CD4-positive, alpha-beta memory T cell (primary cell): ENCODE measurements at regions of chr2 and their contacts with region 1.

Region 1: DNA sequence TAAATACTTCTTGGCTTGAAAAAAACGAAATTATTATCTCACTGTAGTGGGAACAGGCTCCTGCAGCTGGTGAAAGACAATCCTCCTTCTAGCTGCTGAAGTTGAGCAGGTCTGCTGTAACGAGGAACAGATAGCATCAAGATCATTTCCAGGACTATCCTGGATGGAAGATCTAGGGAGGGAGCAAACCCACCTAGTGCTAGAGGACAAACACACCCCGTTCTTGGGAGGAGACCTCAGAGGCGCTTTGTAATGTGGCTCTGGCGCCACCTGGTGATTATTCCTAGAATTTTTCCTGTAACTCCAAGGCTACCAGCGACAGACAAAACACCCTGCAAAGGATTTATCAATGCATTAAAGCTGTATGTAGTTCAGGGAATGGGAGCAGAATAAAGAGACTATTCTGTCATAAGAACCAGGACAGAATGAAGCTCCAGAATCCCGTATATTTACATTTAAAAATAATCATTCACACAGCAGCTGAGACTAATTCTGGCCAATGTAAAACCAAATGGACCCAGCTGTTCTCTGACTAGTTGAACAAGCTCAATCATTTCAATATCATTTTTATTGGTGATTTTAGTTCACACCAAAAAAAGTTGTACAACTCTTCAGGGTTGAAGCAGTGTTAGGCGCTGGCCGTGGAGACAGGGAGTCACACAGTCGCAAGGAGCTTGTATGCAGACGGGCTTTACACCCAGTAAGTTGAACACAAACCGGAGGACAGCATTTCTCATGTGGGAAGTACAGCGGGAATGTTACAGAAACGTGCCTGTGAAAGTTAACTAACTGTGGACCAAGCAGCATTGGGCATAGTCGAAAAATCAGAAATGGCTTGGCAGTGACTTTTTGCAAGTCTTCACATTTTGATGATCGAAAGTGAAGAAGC is 290.3 kb downstream of the TRIB2 start:
- DNase-seq: peak; percentile 49 to 67 (median 61)
- H3K4me3 ChIP-seq: no peak overlapping the region
- H3K4me3 Mint-ChIP-seq: no peak overlapping the region
- H3K27ac ChIP-seq: no peak overlapping the region
- H3K27ac Mint-ChIP-seq: no peak overlapping the region
- H3K4me1 ChIP-seq: peaks cover 5% of the 10 kb centered on the region
- H3K4me1 Mint-ChIP-seq: peaks cover 0 to 7% (median 3%) of the 10 kb centered on the region in 4 donors
- H3K27me3 ChIP-seq: no peaks in the 10 kb centered on the region
- H3K27me3 Mint-ChIP-seq: peaks cover 0 to 2% of the 10 kb centered on the region in 2 donors

Region 2: GRCh38 chr2:11477994-11478393 is 1529.1 kb before region 1 on chr2:
- CTCF ChIA-PET with region 1: interaction called, 3 read pairs
- POLR2A ChIA-PET with region 1: no interaction called
- intact Hi-C with region 1: loop called (anchors 1 kb)
- DNase-seq: peak; percentile 57 to 71 (median 63)
- H3K4me3 ChIP-seq: no peak overlapping the region
- H3K4me3 Mint-ChIP-seq: no peak overlapping the region
- H3K27ac ChIP-seq: no peak overlapping the region
- H3K27ac Mint-ChIP-seq: no peak overlapping the region
- H3K4me1 ChIP-seq: peaks cover under 1% of the 10 kb centered on the region
- H3K4me1 Mint-ChIP-seq: peaks cover under 1 to 5% (median 1%) of the 10 kb centered on the region in 4 donors
- H3K27me3 ChIP-seq: no peaks in the 10 kb centered on the region
- H3K27me3 Mint-ChIP-seq: peaks cover 12 to 17% of the 10 kb centered on the region in 2 donors

Region 3: GRCh38 chr2:11829947-11830707 is 1176.9 kb before region 1 on chr2:
- CTCF ChIA-PET with region 1: interaction called, 74 read pairs
- POLR2A ChIA-PET with region 1: no interaction called
- intact Hi-C with region 1: loop called (anchors 1 kb)
- DNase-seq: peak; percentile 62 to 76 (median 68)
- H3K4me3 ChIP-seq: peak overlapping the region; percentile 52 to 53
- H3K4me3 Mint-ChIP-seq: peak overlapping the region; percentile 83 to 92 (median 85)
- H3K27ac ChIP-seq: no peak overlapping the region
- H3K27ac Mint-ChIP-seq: peak overlapping the region; percentile 42 to 90 (median 82)
- H3K4me1 ChIP-seq: peaks cover 28% of the 10 kb centered on the region
- H3K4me1 Mint-ChIP-seq: peaks cover 23 to 45% (median 36%) of the 10 kb centered on the region in 4 donors
- H3K27me3 ChIP-seq: no peaks in the 10 kb centered on the region
- H3K27me3 Mint-ChIP-seq: no peaks in the 10 kb centered on the region

Region 4: DNA sequence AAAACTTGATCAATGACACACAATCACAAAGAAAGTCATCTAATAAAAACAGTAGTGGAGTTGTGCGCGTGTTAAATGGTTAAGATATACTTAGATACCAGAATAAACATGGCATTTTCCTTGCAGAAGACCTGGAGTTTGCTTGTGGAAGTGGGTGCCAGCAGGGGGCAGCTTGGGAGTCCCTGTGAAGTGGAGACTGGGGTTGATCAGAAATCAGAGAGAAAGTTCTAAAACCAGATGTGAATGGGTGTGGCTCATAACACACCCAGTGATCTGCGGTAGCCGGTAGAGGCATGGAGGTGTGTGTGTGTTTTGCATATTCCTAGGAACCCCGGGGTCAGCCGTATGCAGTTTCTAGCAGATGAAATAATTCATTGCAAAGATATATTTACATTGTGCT is 590.5 kb before region 1 on chr2:
- CTCF ChIA-PET with region 1: interaction called, 22 read pairs
- POLR2A ChIA-PET with region 1: no interaction called
- intact Hi-C with region 1: loop called (anchors 1 kb)
- DNase-seq: peak; percentile 64 to 71 (median 68)
- H3K4me3 ChIP-seq: no peak overlapping the region
- H3K4me3 Mint-ChIP-seq: peak overlapping the region in 7 of 8 donors; percentile 9 to 68 (median 52)
- H3K27ac ChIP-seq: no peak overlapping the region
- H3K27ac Mint-ChIP-seq: peak overlapping the region in 6 of 7 donors; percentile 0 to 65 (median 46)
- H3K4me1 ChIP-seq: peaks cover 49% of the 10 kb centered on the region
- H3K4me1 Mint-ChIP-seq: peaks cover 34 to 75% (median 49%) of the 10 kb centered on the region in 4 donors
- H3K27me3 ChIP-seq: no peaks in the 10 kb centered on the region
- H3K27me3 Mint-ChIP-seq: no peaks in the 10 kb centered on the region

Region 5: GRCh38 chr2:12702305-12703121 is 304.6 kb before region 1 on chr2:
- CTCF ChIA-PET with region 1: interaction called, 10 read pairs
- POLR2A ChIA-PET with region 1: no interaction called
- intact Hi-C with region 1: no loop called
- DNase-seq: no peak
- H3K4me3 ChIP-seq: no peak overlapping the region
- H3K4me3 Mint-ChIP-seq: peak overlapping the region in 7 of 8 donors; percentile 40 to 75 (median 58)
- H3K27ac ChIP-seq: no peak overlapping the region
- H3K27ac Mint-ChIP-seq: peak overlapping the region in 2 of 7 donors; percentile 45 to 60
- H3K4me1 ChIP-seq: peaks cover 50% of the 10 kb centered on the region
- H3K4me1 Mint-ChIP-seq: peaks cover 32 to 48% (median 44%) of the 10 kb centered on the region in 4 donors
- H3K27me3 ChIP-seq: no peaks in the 10 kb centered on the region
- H3K27me3 Mint-ChIP-seq: no peaks in the 10 kb centered on the region

Region 6: GRCh38 chr2:12931186-12931844 is 75.8 kb before region 1 on chr2:
- CTCF ChIA-PET with region 1: interaction called, 34 read pairs
- POLR2A ChIA-PET with region 1: no interaction called
- intact Hi-C with region 1: loop called (anchors 2 kb)
- DNase-seq: peak in 4 of 5 donors; percentile 13 to 25 (median 22)
- H3K4me3 ChIP-seq: no peak overlapping the region
- H3K4me3 Mint-ChIP-seq: no peak overlapping the region
- H3K27ac ChIP-seq: no peak overlapping the region
- H3K27ac Mint-ChIP-seq: no peak overlapping the region
- H3K4me1 ChIP-seq: peaks cover 15% of the 10 kb centered on the region
- H3K4me1 Mint-ChIP-seq: peaks cover 11 to 23% (median 17%) of the 10 kb centered on the region in 4 donors
- H3K27me3 ChIP-seq: no peaks in the 10 kb centered on the region
- H3K27me3 Mint-ChIP-seq: no peaks in the 10 kb centered on the region

Region 7: GRCh38 chr2:13021470-13021957 is 14.4 kb after region 1 on chr2:
- CTCF ChIA-PET with region 1: interaction called, 16 read pairs
- POLR2A ChIA-PET with region 1: no interaction called
- intact Hi-C with region 1: no loop called
- DNase-seq: no peak
- H3K4me3 ChIP-seq: no peak overlapping the region
- H3K4me3 Mint-ChIP-seq: no peak overlapping the region
- H3K27ac ChIP-seq: no peak overlapping the region
- H3K27ac Mint-ChIP-seq: no peak overlapping the region
- H3K4me1 ChIP-seq: no peaks in the 10 kb centered on the region
- H3K4me1 Mint-ChIP-seq: no peaks in the 10 kb centered on the region
- H3K27me3 ChIP-seq: no peaks in the 10 kb centered on the region
- H3K27me3 Mint-ChIP-seq: peaks cover 8 to 28% of the 10 kb centered on the region in 2 donors